ENCODE measurements at regions of chr6 and their contacts with region 1.

Region 1: DNA sequence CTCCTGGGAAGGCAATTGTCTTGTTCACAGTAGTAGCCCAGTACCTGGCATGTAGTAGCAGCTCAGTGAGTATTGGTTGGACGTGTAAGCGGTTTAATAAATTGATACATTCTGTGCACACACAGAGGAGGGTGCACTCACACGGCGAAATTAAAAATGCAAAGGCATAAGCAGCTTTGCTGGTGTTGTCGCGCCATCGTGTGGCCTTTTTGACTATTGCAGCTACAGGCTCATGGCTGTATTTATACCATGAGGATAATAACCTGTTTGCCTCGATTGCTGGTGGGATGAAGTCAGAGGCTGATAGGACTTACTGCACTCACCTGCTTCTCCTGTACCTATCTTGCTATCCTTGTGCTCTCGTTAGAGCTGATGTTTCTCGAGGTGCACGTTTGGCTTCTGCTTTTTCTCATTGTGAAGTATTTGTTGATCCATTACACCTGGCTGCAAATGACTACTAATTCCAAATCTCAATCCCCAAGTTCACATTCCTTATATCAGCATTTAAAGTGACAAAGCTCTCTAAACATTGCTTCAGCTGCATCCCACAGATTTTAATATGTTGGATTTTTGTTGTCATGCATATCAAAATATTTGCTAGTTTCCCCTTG is 61.5 kb downstream of the TBXT start:
- DNase-seq: peak; percentile 73

Region 2: GRCh38 chr6:165884813-165885765 is 221.1 kb before region 1 on chr6:
- CTCF ChIA-PET with region 1: interaction called, 15 read pairs
- POLR2A ChIA-PET with region 1: no interaction called
- DNase-seq: peak; percentile 91

Region 3: DNA sequence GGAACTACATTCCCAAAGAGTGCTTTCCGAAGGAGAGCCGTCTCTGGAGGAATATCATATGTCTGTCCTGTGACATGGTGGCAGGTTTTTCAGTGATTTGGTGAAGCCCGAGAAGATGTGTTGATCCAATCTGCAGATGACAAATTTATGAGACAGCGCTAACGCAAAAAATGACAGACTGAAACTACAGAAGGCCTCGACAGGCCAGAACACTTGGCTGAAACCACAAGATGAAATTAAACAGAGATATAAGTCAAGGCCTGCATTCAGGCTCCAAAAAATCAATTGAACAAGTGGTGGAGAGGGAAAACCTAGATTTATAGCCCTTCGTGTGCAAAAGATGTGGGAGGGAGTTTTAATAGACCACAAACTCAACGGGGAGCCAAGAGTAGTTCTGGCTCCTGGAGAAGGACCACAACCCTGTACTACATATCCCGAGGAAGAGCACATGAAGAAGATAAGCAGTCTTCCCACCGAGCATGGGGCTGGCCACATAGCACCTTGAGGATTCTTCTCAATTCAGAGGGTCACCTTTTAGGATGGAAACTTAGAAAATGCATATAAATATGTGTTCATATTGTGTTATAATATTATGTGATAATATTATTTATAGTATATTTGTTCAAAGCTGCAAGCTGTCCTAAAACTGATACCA is 211.9 kb before region 1 on chr6:
- CTCF ChIA-PET with region 1: interaction called, 15 read pairs
- POLR2A ChIA-PET with region 1: no interaction called
- DNase-seq: peak; percentile 67

Measured in HEK293T (cell line).